ENCODE measurements at regions of chr17 and their contacts with region 1.

Region 1: GRCh38 chr17:19513897-19514488 is 19.7 kb upstream of the SLC47A1 start:
- DNase-seq: peak; percentile 58
- H3K4me3 Mint-ChIP-seq: no peak overlapping the region
- H3K27ac Mint-ChIP-seq: no peak overlapping the region
- H3K4me1 Mint-ChIP-seq: peaks cover 11% of the 10 kb centered on the region
- H3K27me3 Mint-ChIP-seq: no peaks in the 10 kb centered on the region
- CTCF ChIP-seq: peak; percentile 72

Region 2: DNA sequence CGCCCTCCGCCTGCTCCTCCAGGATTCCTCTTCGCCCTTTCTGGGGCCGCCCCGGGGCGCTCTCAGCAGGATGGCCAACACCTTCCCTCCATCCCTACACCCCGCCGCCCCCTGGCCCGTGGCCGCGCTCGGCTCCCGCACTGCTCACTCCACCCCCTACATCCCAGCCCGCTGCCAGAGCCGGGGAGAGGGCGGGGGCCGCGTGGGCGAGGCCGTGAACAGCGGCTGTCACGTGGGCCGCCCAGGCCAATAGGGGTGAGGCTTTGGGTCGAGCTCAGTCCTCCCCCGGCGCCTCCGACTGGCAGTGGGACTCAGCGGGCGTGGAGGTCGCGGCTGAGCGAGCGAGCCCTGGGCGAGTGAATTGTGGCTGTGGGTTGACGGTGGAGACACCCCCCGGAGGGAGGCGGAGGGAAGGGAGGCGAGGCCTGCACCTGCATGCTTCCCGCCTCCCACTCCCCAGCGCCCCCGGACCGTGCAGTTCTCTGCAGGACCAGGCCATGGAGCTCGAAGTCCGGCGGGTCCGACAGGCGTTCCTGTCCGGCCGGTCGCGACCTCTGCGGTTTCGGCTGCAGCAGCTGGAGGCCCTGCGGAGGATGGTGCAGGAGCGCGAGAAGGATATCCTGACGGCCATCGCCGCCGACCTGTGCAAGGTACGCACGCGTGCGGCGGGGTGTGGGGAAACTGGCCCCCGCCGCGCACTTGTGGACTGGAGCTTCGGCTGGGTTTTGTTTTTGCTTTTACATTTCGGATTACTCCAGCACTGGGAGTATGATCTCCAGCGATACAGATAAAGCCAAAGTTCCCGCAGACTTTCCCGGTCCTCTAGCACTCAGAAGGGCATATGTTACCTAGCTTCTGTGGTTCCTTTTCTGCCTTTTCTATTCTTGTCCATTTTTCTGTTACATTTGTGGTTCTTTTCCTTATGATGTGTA is 134.7 kb after region 1 on chr17 and contains the start of gene ALDH3A2:
- CTCF ChIA-PET with region 1: interaction called, 3 read pairs
- intact Hi-C with region 1: loop called (anchors 10 kb)
- DNase-seq: peak; percentile 92
- H3K4me3 Mint-ChIP-seq: peak within 1 kb of the TSS; percentile 75
- H3K27ac Mint-ChIP-seq: peak within 1 kb of the TSS; percentile 86
- H3K4me1 Mint-ChIP-seq: peaks cover 37% of the 10 kb centered on the region
- H3K27me3 Mint-ChIP-seq: no peaks in the 10 kb centered on the region
- CTCF ChIP-seq: no peak
- total RNA-seq, gene ALDH3A2: 32.4 and 38.0 TPM in 2 replicates

Region 3: DNA sequence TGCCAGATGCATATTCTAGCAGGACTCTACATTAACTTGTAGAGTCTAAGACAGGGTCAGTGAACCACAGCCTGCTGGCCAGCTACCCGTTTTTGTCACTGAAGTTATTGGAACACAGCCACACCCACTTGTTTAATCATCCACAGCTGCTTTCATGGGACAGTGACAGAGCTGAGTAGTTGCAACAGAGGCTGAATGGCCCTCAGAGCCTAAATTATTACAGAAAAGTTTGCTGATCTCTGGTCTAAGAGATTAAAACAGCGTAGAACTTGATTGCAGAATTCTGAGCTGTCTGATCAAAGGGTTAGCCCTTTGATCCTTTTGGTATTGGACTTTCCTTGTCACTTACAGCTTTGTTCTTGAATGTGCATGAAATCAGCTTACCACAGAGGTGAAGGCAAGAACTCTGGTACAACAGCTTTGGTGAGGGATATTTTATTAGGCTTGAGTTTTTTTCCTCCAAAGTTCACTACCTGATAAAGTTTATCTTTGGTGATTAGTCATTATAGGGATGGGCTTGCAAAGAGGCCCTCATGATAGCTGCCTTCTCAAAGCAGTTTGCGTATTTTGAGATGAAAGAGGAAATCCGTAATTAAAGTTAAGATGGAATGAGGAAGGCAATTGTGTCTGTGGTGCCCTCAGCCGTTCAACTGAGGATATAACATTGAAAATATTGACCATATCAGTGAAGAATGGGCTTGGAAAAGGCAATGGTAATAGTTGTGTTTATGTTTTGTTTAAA is 158.2 kb after region 1 on chr17:
- CTCF ChIA-PET with region 1: no interaction called
- intact Hi-C with region 1: loop called (anchors 1 kb)
- DNase-seq: peak; percentile 6
- H3K4me3 Mint-ChIP-seq: no peak overlapping the region
- H3K27ac Mint-ChIP-seq: no peak overlapping the region
- H3K4me1 Mint-ChIP-seq: peaks cover 8% of the 10 kb centered on the region
- H3K27me3 Mint-ChIP-seq: no peaks in the 10 kb centered on the region
- CTCF ChIP-seq: no peak

Region 4: DNA sequence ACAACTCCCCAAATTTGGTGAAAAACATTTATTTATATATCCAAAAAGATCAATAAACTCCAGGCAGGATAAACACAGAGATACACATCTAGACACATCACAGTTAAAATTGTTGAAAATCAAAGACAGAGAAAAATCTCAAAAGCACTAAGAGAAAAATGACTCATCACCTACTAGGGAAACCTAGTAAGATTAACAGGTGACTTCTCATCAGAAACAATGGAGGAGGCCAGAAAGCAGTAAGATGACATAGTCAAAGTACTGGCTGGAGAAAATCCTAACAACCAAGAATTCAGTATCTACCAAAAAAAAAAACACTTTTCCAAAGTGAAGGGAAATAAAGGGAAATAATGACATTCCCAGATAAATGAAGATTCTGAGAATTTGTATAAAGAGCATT is 319.9 kb after region 1 on chr17:
- CTCF ChIA-PET with region 1: no interaction called
- intact Hi-C with region 1: no loop called
- DNase-seq: no peak
- H3K4me3 Mint-ChIP-seq: no peak overlapping the region
- H3K27ac Mint-ChIP-seq: no peak overlapping the region
- H3K4me1 Mint-ChIP-seq: no peaks in the 10 kb centered on the region
- H3K27me3 Mint-ChIP-seq: no peaks in the 10 kb centered on the region
- CTCF ChIP-seq: no peak